CD8-positive, alpha-beta memory T cell (primary cell): ENCODE measurements at regions of chr6 and their contacts with region 1.

Region 1: GRCh38 chr6:149565527-149566409 is at the start of gene GINM1:
- DNase-seq: peak; percentile 90 to 96 (median 95)
- H3K4me3 ChIP-seq: peak within 1 kb of the TSS; percentile 97
- H3K4me3 Mint-ChIP-seq: peak within 1 kb of the TSS; percentile 91 to 99 (median 96)
- H3K27ac ChIP-seq: peak within 1 kb of the TSS; percentile 83
- H3K27ac Mint-ChIP-seq: peak within 1 kb of the TSS; percentile 92 to 98 (median 96)
- H3K4me1 ChIP-seq: peaks cover 16% of the 10 kb centered on the region
- H3K4me1 Mint-ChIP-seq: peaks cover 17 to 42% (median 25%) of the 10 kb centered on the region in 3 donors
- H3K27me3 ChIP-seq: no peaks in the 10 kb centered on the region
- H3K27me3 Mint-ChIP-seq: peaks cover 0 to 4% of the 10 kb centered on the region in 2 donors
- total RNA-seq, gene GINM1: 20.4 to 20.5 TPM

Region 2: DNA sequence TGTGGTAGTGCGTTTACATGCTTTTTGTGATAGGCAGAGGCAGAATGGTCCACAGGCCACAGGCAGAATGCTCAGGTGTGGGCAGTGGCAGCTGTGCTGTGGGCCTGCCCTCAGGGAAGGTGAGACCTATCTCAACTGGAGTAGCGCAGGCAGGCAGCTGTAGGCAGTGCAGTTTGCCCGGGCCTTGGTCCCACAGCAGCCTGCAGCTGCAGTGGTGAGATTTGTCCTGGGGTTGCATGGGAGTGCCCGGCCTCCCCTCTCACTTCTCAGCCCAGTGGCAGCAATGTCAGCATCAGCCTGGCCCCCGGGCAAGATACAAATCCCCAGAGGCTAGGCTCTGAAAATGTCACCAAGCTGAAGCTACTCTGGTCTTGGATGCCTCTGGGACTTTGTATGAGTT is 13.8 kb before region 1 on chr6:
- CTCF ChIA-PET with region 1: interaction called, 51 read pairs
- POLR2A ChIA-PET with region 1: interaction called, 13 read pairs
- DNase-seq: no peak
- H3K4me3 ChIP-seq: no peak overlapping the region
- H3K4me3 Mint-ChIP-seq: no peak overlapping the region
- H3K27ac ChIP-seq: no peak overlapping the region
- H3K27ac Mint-ChIP-seq: peak overlapping the region in 1 of 8 donors; percentile 62
- H3K4me1 ChIP-seq: no peaks in the 10 kb centered on the region
- H3K4me1 Mint-ChIP-seq: peaks cover 3 to 4% (median 4%) of the 10 kb centered on the region in 3 donors
- H3K27me3 ChIP-seq: no peaks in the 10 kb centered on the region
- H3K27me3 Mint-ChIP-seq: peaks cover 15 to 38% of the 10 kb centered on the region in 2 donors